ENCODE measurements at regions of chr15 and their contacts with region 1.

Region 1: GRCh38 chr15:60326824-60327654 is 70.7 kb downstream of the ANXA2 start:
- DNase-seq: peak; percentile 56
- H3K4me3 Mint-ChIP-seq: no peak overlapping the region
- H3K27ac Mint-ChIP-seq: no peak overlapping the region
- H3K4me1 Mint-ChIP-seq: peaks cover 8% of the 10 kb centered on the region
- H3K27me3 Mint-ChIP-seq: peaks cover 65% of the 10 kb centered on the region

Region 2: GRCh38 chr15:60292540-60292939 is 34.5 kb before region 1 on chr15:
- CTCF ChIA-PET with region 1: no interaction called
- POLR2A ChIA-PET with region 1: no interaction called
- DNase-seq: no peak
- H3K4me3 Mint-ChIP-seq: no peak overlapping the region
- H3K27ac Mint-ChIP-seq: no peak overlapping the region
- H3K4me1 Mint-ChIP-seq: no peaks in the 10 kb centered on the region
- H3K27me3 Mint-ChIP-seq: peaks cover 12% of the 10 kb centered on the region

Region 3: GRCh38 chr15:60315878-60316277 is 11.2 kb before region 1 on chr15:
- CTCF ChIA-PET with region 1: interaction called, 15 read pairs
- POLR2A ChIA-PET with region 1: no interaction called
- DNase-seq: no peak
- H3K4me3 Mint-ChIP-seq: no peak overlapping the region
- H3K27ac Mint-ChIP-seq: no peak overlapping the region
- H3K4me1 Mint-ChIP-seq: no peaks in the 10 kb centered on the region
- H3K27me3 Mint-ChIP-seq: peaks cover 9% of the 10 kb centered on the region

Measured in activated CD4-positive, alpha-beta T cell treated with anti-CD3 and anti-CD28 coated beads, Interleukin-2, amount 10 ng/mL, durations not matched to agents 7 days and 5 days (primary cell).